Activated B cell treated with CpG ODN at 0.5 μM for 24 hours (primary cell): ENCODE measurements at regions of chrX and their contacts with region 1.

Region 1: GRCh38 chrX:132488819-132489577 is at the start of gene MBNL3:
- DNase-seq: peak; percentile 61
- ATAC-seq: peak; percentile 63
- H3K4me3 Mint-ChIP-seq: peak within 1 kb of the TSS; percentile 98
- H3K27ac Mint-ChIP-seq: peak within 1 kb of the TSS; percentile 99
- H3K4me1 Mint-ChIP-seq: peaks cover 60% of the 10 kb centered on the region
- H3K27me3 Mint-ChIP-seq: no peaks in the 10 kb centered on the region
- CTCF ChIP-seq: no peak
- total RNA-seq, gene MBNL3: 41.0 and 47.0 TPM in 2 replicates

Region 2: DNA sequence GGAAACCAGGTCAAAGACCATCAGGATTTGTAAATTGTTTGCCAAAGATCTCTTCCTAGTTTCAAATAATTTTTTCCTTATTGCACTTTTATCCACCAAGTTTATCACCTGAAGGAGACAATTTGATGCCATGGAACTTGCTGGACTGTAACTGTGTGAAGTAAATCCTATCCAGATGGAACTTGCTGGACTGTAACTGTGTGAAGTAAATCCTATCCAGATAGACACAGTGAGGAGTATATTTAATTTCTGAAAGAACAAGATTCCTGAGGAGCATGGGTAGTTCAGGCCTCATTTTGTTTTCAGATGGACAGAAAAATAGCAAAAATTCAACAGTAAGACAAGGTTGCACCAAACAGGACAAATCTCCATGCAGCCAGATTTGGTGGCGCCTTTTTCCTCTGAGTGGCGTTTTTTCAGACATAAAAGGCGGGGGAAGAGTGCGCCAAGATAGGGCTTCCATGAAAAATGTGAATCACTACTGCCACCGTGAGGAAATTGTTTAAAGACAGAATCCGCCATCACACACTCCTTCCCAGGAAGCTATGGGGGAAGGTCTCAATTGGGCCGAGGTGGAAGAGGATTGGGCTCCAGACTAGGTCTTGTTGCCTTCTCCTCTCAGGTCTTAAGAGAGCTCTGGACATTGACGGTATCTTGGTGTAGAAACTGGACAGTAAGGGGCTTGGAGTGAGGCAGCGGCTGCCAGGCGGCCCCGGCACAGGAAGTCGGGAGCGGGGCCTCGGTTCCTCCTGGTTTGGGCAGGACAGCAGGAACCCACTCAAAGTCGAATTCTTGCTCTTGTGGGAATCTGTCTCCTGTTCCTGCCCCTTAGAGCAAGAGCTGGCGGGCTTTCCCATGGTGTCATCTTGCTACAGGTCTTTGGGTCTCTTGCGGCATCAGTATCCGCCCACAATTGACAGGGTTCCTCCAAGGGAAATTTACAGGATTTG is 710.5 kb before region 1 on chrX:
- CTCF ChIA-PET with region 1: no interaction called
- POLR2A ChIA-PET with region 1: no interaction called
- intact Hi-C with region 1: no loop called
- DNase-seq: no peak
- ATAC-seq: no peak
- H3K4me3 Mint-ChIP-seq: no peak overlapping the region
- H3K27ac Mint-ChIP-seq: no peak overlapping the region
- H3K4me1 Mint-ChIP-seq: no peaks in the 10 kb centered on the region
- H3K27me3 Mint-ChIP-seq: no peaks in the 10 kb centered on the region
- CTCF ChIP-seq: no peak

Region 3: DNA sequence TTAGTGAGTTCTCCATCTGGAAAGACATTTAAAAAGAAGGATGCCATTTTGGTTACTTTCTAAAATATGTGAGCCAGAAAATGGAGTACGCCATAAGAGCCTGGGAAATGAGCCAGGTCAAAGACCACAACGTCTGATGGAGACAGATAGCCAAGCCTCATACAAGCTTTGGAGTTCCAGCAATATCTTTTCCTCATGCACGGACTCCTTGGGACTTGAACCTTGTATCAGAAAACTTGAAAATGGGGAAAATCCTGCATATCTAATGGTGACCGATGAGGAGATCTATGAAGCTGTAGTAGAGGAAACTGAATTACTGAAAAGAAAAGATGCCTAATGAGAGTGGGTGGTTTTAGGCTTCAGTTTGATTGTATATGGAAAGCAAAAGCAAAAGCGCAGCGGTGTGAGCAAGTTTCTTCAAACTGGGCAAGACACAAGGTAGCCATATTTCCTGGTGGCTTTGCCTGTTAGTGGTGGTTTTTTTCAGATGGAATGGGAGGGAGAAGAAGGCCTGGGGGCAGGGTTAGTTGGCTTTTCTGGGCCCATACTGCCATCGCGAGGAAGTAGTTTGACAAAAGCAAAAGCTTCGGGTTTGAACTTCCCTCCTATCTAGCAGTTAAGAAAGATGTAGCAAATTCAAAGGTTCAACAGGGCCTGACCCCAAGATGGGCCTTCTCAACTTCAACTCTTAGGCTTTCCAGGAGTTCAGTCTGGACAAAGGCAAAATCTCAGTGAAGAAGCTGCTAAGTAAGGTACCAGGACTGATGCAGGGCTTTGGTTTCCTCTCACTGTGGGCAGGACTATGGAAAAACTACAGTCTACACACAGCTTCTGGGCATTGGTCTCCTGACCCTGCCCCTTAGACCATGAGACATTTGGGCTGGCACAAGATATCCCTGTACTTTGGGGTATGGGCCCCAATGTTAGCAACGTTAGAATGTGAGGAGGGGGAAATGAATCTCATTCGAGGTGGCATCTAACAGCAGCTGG is 675.9 kb before region 1 on chrX:
- CTCF ChIA-PET with region 1: no interaction called
- POLR2A ChIA-PET with region 1: no interaction called
- intact Hi-C with region 1: loop called (anchors 10 kb)
- DNase-seq: peak; percentile 46
- ATAC-seq: peak; percentile 79
- H3K4me3 Mint-ChIP-seq: peak overlapping the region; percentile 80
- H3K27ac Mint-ChIP-seq: peak overlapping the region; percentile 91
- H3K4me1 Mint-ChIP-seq: peaks cover 26% of the 10 kb centered on the region
- H3K27me3 Mint-ChIP-seq: no peaks in the 10 kb centered on the region
- CTCF ChIP-seq: no peak

Region 4: GRCh38 chrX:132375934-132376333 is 113.1 kb before region 1 on chrX:
- CTCF ChIA-PET with region 1: no interaction called
- POLR2A ChIA-PET with region 1: no interaction called
- intact Hi-C with region 1: no loop called
- DNase-seq: no peak
- ATAC-seq: no peak
- H3K4me3 Mint-ChIP-seq: no peak overlapping the region
- H3K27ac Mint-ChIP-seq: no peak overlapping the region
- H3K4me1 Mint-ChIP-seq: no peaks in the 10 kb centered on the region
- H3K27me3 Mint-ChIP-seq: no peaks in the 10 kb centered on the region
- CTCF ChIP-seq: no peak

Region 5: GRCh38 chrX:132407691-132408090 is 81.3 kb before region 1 on chrX:
- CTCF ChIA-PET with region 1: no interaction called
- POLR2A ChIA-PET with region 1: no interaction called
- intact Hi-C with region 1: loop called (anchors 5 kb)
- DNase-seq: no peak
- ATAC-seq: no peak
- H3K4me3 Mint-ChIP-seq: no peak overlapping the region
- H3K27ac Mint-ChIP-seq: peak overlapping the region; percentile 59
- H3K4me1 Mint-ChIP-seq: peaks cover 9% of the 10 kb centered on the region
- H3K27me3 Mint-ChIP-seq: no peaks in the 10 kb centered on the region
- CTCF ChIP-seq: no peak

Region 6: GRCh38 chrX:133638285-133638684 is 1149.3 kb after region 1 on chrX:
- CTCF ChIA-PET with region 1: no interaction called
- POLR2A ChIA-PET with region 1: no interaction called
- intact Hi-C with region 1: no loop called
- DNase-seq: no peak
- ATAC-seq: no peak
- H3K4me3 Mint-ChIP-seq: no peak overlapping the region
- H3K27ac Mint-ChIP-seq: no peak overlapping the region
- H3K4me1 Mint-ChIP-seq: no peaks in the 10 kb centered on the region
- H3K27me3 Mint-ChIP-seq: no peaks in the 10 kb centered on the region
- CTCF ChIP-seq: no peak